ENCODE measurements at regions of chr11 and their contacts with region 1.

Region 1: GRCh38 chr11:9861860-9862725 is 198.2 kb downstream of the SWAP70 start:
- DNase-seq: peak in 6 of 9 experiments; percentile 16 to 65 (median 42)
- ATAC-seq: peak; percentile 77
- H3K4me3 ChIP-seq: no peak overlapping the region
- H3K4me3 Mint-ChIP-seq: no peak overlapping the region
- H3K27ac ChIP-seq: no peak overlapping the region
- H3K27ac Mint-ChIP-seq: no peak overlapping the region
- H3K4me1 ChIP-seq: peaks cover 15% of the 10 kb centered on the region
- H3K4me1 Mint-ChIP-seq: peaks cover 22% of the 10 kb centered on the region
- H3K27me3 ChIP-seq: no peaks in the 10 kb centered on the region
- H3K27me3 Mint-ChIP-seq: no peaks in the 10 kb centered on the region
- CTCF ChIP-seq: peak; percentile 62

Region 2: DNA sequence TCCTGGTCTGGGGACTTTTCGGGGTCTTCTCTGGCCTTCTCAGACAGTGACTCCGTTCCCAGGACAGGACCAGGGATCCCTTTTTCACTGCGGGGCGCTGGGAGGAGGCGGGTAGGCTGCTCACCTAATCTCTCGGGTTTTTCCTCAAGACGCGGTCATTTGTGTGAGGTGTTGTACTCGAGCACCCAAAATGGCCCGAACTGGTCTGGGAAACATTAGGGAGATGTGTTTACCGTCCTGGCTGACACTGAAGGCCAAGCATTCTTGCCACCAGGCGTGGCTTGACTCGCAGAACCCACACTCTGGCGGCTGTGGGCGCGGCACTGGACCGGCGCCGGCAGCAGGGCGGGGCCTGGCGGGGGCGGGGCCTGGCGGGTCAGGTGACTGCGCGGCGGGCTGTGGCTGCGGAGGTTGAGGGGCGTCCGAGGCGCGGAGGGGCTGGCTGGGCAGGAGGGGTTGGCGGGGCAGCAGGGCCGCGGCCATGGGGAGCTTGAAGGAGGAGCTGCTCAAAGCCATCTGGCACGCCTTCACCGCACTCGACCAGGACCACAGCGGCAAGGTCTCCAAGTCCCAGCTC is 198.3 kb before region 1 on chr11 and contains the start of gene SWAP70:
- CTCF ChIA-PET with region 1: no interaction called
- POLR2A ChIA-PET with region 1: no interaction called
- intact Hi-C with region 1: no loop called
- DNase-seq: peak; percentile 47 to 82 (median 74)
- ATAC-seq: peak; percentile 90
- H3K4me3 ChIP-seq: peak within 1 kb of the TSS; percentile 78 to 80
- H3K4me3 Mint-ChIP-seq: peak within 1 kb of the TSS; percentile 88
- H3K27ac ChIP-seq: peak within 1 kb of the TSS in 1 of 2 experiments; percentile 11
- H3K27ac Mint-ChIP-seq: peak within 1 kb of the TSS; percentile 75
- H3K4me1 ChIP-seq: peaks cover 11% of the 10 kb centered on the region
- H3K4me1 Mint-ChIP-seq: peaks cover 19% of the 10 kb centered on the region
- H3K27me3 ChIP-seq: peaks cover 0 to 3% of the 10 kb centered on the region in 2 experiments
- H3K27me3 Mint-ChIP-seq: peaks cover 28% of the 10 kb centered on the region
- CTCF ChIP-seq: no peak
- total RNA-seq, gene SWAP70: 4.2 to 4.6 TPM

Region 3: DNA sequence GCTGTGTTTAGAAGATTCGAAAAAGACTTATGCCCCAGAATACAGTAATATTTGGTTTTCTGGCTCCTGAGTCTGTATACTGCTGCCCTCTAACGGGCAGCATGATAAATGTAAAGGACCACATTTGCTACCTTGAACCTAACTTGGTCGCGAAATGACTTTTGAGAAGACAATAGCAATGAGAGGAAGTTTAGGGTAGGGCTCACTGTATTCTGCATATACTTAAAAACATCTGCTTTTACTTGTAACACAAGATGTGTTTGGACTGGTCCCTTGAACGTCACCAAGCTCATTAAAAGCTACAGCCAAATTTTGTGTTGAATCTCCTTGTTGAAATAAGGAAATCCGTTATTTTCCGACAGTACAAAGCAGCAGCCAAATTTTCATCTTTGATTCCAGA is 110.9 kb after region 1 on chr11:
- CTCF ChIA-PET with region 1: no interaction called
- POLR2A ChIA-PET with region 1: no interaction called
- intact Hi-C with region 1: loop called in 1 of 2 experiments (anchors 10 kb)
- DNase-seq: peak in 2 of 9 experiments; percentile 23 to 54
- ATAC-seq: peak; percentile 54
- H3K4me3 ChIP-seq: no peak overlapping the region
- H3K4me3 Mint-ChIP-seq: no peak overlapping the region
- H3K27ac ChIP-seq: no peak overlapping the region
- H3K27ac Mint-ChIP-seq: no peak overlapping the region
- H3K4me1 ChIP-seq: no peaks in the 10 kb centered on the region
- H3K4me1 Mint-ChIP-seq: no peaks in the 10 kb centered on the region
- H3K27me3 ChIP-seq: no peaks in the 10 kb centered on the region
- H3K27me3 Mint-ChIP-seq: no peaks in the 10 kb centered on the region
- CTCF ChIP-seq: peak; percentile 53

Region 4: DNA sequence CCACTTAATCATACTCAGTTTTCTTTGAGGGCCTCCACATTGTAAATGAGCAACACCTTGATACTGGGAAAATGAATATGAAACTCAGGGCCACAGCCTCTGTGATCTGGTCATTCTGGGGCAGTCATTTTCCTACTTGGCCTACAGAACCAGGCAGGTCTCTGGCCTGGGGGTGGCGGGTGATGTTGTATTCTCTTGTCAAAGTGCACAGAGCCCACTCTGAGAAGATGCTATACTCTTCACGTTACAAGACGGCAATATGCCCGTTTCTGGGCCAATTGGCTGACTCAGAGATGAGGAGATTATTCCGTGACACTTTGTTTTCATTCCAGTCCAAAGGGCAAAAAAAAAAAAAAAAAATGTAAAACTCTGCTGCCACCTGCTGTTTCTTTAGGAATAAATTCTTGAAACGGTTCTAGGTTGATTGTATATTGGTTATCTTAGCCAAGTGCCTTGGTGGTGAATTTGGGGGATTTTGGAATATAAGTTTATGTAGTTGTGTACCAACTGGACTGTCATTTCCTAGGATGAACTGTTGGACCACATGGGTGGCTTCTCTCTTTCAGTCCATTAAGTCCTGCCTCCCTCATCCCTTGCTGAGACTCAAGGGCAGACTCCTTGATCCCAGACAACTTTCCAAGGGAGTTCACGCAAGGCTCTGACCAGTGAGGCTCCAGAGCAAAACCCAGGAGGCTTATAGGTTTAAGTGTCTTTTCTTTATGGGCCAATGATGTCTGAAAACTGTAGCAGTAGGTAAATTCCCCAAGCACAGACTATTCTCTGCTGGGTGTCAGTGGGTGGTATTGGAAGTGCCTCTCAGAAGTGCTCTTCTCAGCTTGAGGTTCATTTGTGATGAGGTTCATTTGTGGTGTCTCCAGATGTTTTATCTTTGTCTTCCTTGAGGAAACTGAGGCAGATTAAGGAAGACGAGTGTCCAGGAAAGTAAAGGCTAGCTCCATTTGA is 461.0 kb after region 1 on chr11:
- CTCF ChIA-PET with region 1: interaction called, 3 read pairs
- POLR2A ChIA-PET with region 1: no interaction called
- intact Hi-C with region 1: loop called (anchors 1 to 2 kb)
- DNase-seq: peak in 5 of 9 experiments; percentile 26 to 67 (median 38)
- ATAC-seq: peak; percentile 82
- H3K4me3 ChIP-seq: no peak overlapping the region
- H3K4me3 Mint-ChIP-seq: no peak overlapping the region
- H3K27ac ChIP-seq: no peak overlapping the region
- H3K27ac Mint-ChIP-seq: no peak overlapping the region
- H3K4me1 ChIP-seq: no peaks in the 10 kb centered on the region
- H3K4me1 Mint-ChIP-seq: peaks cover 3% of the 10 kb centered on the region
- H3K27me3 ChIP-seq: no peaks in the 10 kb centered on the region
- H3K27me3 Mint-ChIP-seq: peaks cover 4% of the 10 kb centered on the region
- CTCF ChIP-seq: peak; percentile 55

Region 5: DNA sequence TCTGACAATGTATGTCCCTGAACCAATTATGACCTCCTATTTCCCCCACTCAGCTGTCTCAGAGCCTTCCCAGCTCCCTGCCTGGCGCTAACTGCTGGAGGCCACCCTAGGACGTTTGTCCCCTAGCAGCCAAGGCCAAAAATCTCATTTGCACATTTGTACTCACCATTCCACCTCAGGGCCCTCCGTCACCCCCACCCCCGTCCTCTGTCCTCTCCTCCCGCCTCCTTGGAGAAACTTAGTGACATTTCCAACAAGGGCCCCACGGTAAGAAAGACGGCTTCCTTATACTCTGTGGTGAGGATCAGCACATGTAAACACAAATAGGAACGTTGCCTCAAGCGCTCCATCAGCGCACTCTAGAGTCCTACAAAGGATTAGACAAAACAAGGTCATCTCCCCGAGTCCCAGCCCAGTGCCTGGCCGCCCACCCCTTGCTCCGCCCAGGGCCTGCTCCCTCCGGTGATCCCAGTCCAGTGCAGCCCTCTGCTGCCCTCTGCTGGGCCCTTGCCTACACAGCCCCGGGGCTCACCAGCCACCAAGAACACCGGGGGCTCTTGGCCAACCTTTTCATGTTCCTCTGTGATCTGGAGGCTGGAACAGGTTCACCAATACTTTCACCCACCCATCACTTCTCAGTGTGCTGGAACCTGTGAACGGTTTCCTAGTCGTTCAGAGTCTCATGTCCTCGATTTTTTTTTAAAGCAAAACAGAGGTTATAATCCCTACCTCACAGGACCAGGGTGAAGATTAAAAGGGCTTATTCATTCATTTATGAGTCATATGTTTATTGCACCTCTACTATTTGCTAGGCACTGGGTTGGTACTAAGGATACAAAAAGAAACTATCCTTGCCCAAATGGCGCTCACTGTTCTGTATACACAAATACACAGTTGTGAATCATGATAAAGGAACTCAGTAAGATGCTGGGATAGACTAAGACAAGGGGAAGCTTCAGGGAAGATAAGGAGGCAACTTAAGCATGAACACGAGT is 873.7 kb after region 1 on chr11:
- CTCF ChIA-PET with region 1: no interaction called
- POLR2A ChIA-PET with region 1: no interaction called
- intact Hi-C with region 1: loop called in 1 of 2 experiments (anchors 5 kb)
- DNase-seq: peak; percentile 73 to 91 (median 85)
- ATAC-seq: peak; percentile 99
- H3K4me3 ChIP-seq: peak overlapping the region; percentile 3 to 20
- H3K4me3 Mint-ChIP-seq: peak overlapping the region; percentile 56
- H3K27ac ChIP-seq: no peak overlapping the region
- H3K27ac Mint-ChIP-seq: no peak overlapping the region
- H3K4me1 ChIP-seq: peaks cover 9% of the 10 kb centered on the region
- H3K4me1 Mint-ChIP-seq: peaks cover 13% of the 10 kb centered on the region
- H3K27me3 ChIP-seq: no peaks in the 10 kb centered on the region
- H3K27me3 Mint-ChIP-seq: no peaks in the 10 kb centered on the region
- CTCF ChIP-seq: peak; percentile 96